Endothelial cell of umbilical vein (primary cell): ENCODE measurements at regions of chr1 and their contacts with region 1.

Region 1: GRCh38 chr1:65687428-65688214 is 105.1 kb upstream of the PDE4B start:
- DNase-seq: peak; percentile 87
- H3K4me3 ChIP-seq: no peak overlapping the region
- H3K27ac ChIP-seq: no peak overlapping the region
- H3K4me1 ChIP-seq: peaks cover 15% of the 10 kb centered on the region
- H3K27me3 ChIP-seq: no peaks in the 10 kb centered on the region
- CTCF ChIP-seq: peak; percentile 72 to 86
- POLR2A ChIP-seq: no peak

Region 2: DNA sequence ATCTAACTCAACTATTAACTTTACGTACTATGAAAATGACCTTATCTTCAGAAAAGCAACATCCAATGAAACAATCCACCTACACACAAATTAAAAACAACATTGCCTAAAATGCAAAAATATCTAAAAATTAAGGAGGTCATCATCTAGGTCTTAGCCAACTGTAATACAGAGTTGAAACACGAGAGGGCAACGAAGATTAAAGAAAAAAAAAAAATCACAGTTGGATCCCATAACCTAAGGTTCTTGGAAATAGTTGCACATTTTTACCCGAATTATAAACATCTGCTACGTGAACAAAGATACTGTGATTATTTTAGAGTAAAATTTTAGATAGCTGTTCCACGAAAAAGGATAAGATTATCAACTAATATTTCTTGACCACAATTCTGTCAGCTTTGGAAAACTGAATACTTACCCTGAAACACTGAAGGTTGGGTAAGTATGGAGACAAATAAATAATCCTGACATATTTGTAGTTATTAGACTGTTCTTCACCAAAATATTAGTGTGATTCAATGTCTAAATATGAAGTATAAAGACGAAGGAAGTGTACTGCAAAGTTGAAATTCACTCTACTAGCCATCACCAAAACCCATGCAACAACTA is 627.6 kb before region 1 on chr1:
- CTCF ChIA-PET with region 1: interaction called, 25 read pairs
- POLR2A ChIA-PET with region 1: no interaction called
- dilution Hi-C with region 1: no loop called
- intact Hi-C with region 1: loop called (anchors 1 kb)
- DNase-seq: peak; percentile 69
- H3K4me3 ChIP-seq: no peak overlapping the region
- H3K27ac ChIP-seq: no peak overlapping the region
- H3K4me1 ChIP-seq: peaks cover 3% of the 10 kb centered on the region
- H3K27me3 ChIP-seq: no peaks in the 10 kb centered on the region
- CTCF ChIP-seq: peak; percentile 33 to 39
- POLR2A ChIP-seq: no peak

Region 3: GRCh38 chr1:65148548-65149350 is 538.9 kb before region 1 on chr1:
- CTCF ChIA-PET with region 1: interaction called, 13 read pairs
- POLR2A ChIA-PET with region 1: no interaction called
- dilution Hi-C with region 1: no loop called
- intact Hi-C with region 1: no loop called
- DNase-seq: peak; percentile 12
- H3K4me3 ChIP-seq: peak overlapping the region; percentile 38 to 50 (median 44)
- H3K27ac ChIP-seq: no peak overlapping the region
- H3K4me1 ChIP-seq: no peaks in the 10 kb centered on the region
- H3K27me3 ChIP-seq: peaks cover 0 to 13% of the 10 kb centered on the region in 2 experiments
- CTCF ChIP-seq: no peak
- POLR2A ChIP-seq: no peak

Region 4: DNA sequence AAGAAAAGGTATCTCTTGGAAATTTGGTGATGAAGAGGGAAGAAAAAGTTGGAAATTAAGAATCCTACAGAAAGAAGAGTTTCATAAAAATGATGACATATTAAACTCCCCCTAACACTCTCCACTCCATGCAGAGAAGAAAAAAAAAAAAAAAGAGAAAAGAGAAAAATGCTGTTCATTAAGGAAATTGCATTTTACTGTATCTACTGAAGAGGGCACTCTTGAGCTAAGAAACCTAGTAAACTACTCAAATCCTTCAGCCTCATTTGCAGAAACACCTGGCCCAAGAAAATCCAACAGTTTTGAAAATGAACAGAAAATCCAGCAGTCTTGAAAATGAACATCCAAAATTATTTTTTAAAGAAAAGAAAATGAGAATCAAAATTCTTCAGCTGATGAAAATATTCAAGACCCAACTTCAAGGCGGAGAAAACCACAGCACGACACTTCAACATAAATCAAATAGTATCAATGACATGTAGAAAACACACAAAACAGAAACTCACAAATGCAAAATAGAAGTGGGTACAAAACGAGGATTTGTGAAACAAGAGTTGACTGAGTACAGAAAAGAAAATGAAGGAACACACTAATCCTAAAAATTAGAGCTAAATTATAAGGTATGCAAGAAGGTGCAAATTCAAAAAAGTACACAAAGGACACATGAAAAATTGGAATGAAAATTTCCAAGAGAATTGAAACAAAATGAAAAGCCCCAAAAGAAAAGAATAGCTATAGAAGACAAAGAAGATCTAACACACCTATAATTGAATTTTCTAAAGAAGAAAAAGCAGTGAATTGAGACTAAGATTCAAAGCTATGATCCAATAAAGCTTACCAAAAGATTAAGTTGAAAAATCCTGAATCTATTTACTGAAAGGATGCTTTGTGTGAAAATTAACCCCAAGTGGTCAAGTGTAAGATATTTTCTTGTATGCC is 451.5 kb before region 1 on chr1:
- CTCF ChIA-PET with region 1: interaction called, 292 read pairs
- POLR2A ChIA-PET with region 1: no interaction called
- dilution Hi-C with region 1: no loop called
- intact Hi-C with region 1: loop called (anchors 1 kb)
- DNase-seq: peak; percentile 52
- H3K4me3 ChIP-seq: no peak overlapping the region
- H3K27ac ChIP-seq: no peak overlapping the region
- H3K4me1 ChIP-seq: no peaks in the 10 kb centered on the region
- H3K27me3 ChIP-seq: no peaks in the 10 kb centered on the region
- CTCF ChIP-seq: peak; percentile 37 to 40
- POLR2A ChIP-seq: no peak

Region 5: DNA sequence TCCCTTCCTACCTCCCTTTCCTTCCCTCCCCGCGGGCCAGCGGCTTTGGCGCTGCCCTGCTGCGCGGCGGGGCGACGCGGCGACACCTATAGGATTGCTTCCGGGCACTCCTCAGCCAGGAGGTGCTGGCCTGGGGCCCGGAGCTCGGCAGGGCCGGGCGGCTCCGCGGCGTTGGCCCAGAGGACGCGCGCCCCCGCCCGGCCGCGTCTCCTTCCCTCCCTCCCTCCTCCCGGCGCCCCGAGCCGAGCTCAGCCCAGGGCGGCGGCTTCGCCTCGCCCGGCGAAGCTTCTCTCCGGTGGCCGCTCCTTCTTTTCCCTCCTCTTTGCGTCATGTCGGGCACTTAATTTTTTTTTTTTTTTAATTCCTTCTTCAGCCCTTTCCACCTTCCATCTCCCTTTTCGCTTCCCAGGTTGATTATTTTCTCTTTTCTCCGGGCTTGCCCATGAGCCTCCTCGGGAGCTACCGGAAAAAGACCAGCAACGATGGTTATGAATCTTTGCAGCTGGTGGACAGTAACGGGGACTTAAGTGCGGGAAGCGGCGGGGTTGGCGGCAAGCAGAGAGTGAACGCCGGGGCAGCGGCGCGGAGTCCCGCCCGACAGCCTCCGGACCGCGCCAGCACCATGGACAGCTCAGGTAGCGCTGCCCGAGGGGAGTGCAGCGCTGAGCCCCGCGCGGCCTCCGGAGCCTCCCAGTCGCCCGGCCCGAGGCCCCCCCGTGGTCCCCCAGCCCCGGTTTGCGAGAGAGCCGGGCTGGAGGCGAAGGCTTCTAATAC is 378.1 kb before region 1 on chr1 and contains the start of gene DNAJC6:
- CTCF ChIA-PET with region 1: interaction called, 10 read pairs
- POLR2A ChIA-PET with region 1: no interaction called
- dilution Hi-C with region 1: no loop called
- intact Hi-C with region 1: no loop called
- DNase-seq: peak; percentile 67
- H3K4me3 ChIP-seq: peak within 1 kb of the TSS; percentile 21 to 64 (median 25)
- H3K27ac ChIP-seq: no peak within 1 kb of the TSS
- H3K4me1 ChIP-seq: no peaks in the 10 kb centered on the region
- H3K27me3 ChIP-seq: peaks cover 5 to 8% of the 10 kb centered on the region in 2 experiments
- CTCF ChIP-seq: no peak
- POLR2A ChIP-seq: no peak
- total RNA-seq, gene DNAJC6: 2.7 and 4.9 TPM in 2 replicates

Region 6: DNA sequence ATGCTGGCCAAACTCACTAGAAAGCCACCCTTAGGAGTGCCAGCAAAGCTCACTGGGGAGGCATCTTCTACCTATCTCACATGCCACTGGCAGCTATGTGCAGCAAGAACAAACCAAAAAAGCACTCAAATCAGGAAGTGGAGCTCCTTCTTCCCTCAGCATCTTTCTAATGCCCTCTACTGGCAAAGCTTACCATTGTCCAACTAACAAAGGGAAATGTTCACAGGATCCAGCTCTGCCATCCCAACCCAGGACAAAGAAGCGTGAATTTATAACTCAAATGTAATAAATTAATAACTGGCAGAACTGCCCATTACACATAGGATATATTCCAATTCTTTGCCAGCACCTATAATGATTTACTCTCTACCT is 228.2 kb before region 1 on chr1:
- CTCF ChIA-PET with region 1: interaction called, 26 read pairs
- POLR2A ChIA-PET with region 1: no interaction called
- dilution Hi-C with region 1: no loop called
- intact Hi-C with region 1: no loop called
- DNase-seq: peak; percentile 50
- H3K4me3 ChIP-seq: no peak overlapping the region
- H3K27ac ChIP-seq: no peak overlapping the region
- H3K4me1 ChIP-seq: no peaks in the 10 kb centered on the region
- H3K27me3 ChIP-seq: no peaks in the 10 kb centered on the region
- CTCF ChIP-seq: peak; percentile 44 to 56
- POLR2A ChIP-seq: no peak

Region 7: DNA sequence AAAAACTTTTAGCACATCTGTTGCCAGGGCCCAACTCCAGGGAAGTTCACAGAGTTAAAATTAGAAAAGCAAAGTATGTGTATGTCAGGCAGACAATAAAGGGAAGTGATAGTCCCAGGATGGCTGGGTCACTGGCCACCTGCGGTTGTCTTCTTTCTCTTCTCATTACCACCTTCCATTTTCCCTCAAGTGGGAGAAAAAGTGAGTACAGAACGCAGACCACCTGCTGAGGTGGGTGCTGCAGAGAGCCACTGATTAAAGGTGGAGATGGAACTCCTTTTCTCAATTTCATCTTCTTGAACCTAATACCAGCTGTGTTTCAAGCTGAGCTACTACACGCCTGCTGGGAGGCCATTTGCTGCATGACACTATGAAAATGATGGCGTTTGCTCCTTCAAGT is 16.2 kb after region 1 on chr1:
- CTCF ChIA-PET with region 1: interaction called, 11 read pairs
- POLR2A ChIA-PET with region 1: no interaction called
- dilution Hi-C with region 1: no loop called
- intact Hi-C with region 1: no loop called
- DNase-seq: no peak
- H3K4me3 ChIP-seq: no peak overlapping the region
- H3K27ac ChIP-seq: no peak overlapping the region
- H3K4me1 ChIP-seq: no peaks in the 10 kb centered on the region
- H3K27me3 ChIP-seq: peaks cover 4 to 11% of the 10 kb centered on the region in 2 experiments
- CTCF ChIP-seq: no peak
- POLR2A ChIP-seq: no peak

Region 8: DNA sequence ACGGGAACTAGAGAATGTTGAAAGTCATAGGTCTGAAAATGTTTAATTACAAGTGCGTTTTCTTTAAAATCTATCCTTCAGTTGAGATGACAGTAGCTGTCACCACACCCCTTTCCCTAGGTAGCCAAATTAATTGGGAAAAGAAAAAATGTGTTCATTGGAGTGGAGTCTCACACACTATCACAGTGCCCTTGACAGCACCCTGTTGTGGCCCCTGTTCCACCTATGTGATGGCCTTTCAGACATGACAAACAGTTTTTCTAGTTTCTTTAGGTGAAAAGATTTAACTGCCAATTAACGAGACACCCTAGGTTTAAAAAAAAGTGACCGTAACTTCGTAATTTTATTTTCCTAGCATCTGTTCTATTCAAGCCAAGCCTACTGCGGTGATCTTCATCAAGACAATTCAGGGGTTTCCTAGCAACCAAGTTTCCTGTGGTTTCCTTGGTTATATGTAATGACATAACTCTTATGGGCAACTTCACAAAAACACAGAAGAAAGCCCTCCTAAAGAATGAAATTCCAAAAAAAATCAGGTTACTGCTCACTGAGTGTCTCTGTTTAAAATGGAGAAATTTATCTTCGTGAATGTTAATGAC is 403.3 kb after region 1 on chr1:
- CTCF ChIA-PET with region 1: no interaction called
- POLR2A ChIA-PET with region 1: no interaction called
- dilution Hi-C with region 1: no loop called
- intact Hi-C with region 1: no loop called
- DNase-seq: no peak
- H3K4me3 ChIP-seq: no peak overlapping the region
- H3K27ac ChIP-seq: no peak overlapping the region
- H3K4me1 ChIP-seq: no peaks in the 10 kb centered on the region
- H3K27me3 ChIP-seq: no peaks in the 10 kb centered on the region
- CTCF ChIP-seq: no peak
- POLR2A ChIP-seq: no peak